Activated CD8-positive, alpha-beta memory T cell treated with anti-CD3 and anti-CD28 coated beads, Interleukin-2, amount 10 ng/mL, durations not matched to agents 7 days and 5 days (primary cell): ENCODE measurements at regions of chr3 and their contacts with region 1.

Region 1: GRCh38 chr3:50260027-50260941 is 8.7 kb upstream of the SEMA3B start:
- DNase-seq: peak; percentile 91
- ATAC-seq: peak; percentile 97
- H3K4me3 Mint-ChIP-seq: peak overlapping the region; percentile 47
- H3K27ac Mint-ChIP-seq: peak overlapping the region; percentile 32
- H3K4me1 Mint-ChIP-seq: peaks cover 7% of the 10 kb centered on the region
- H3K27me3 Mint-ChIP-seq: no peaks in the 10 kb centered on the region

Region 2: GRCh38 chr3:50088725-50089608 is 171.3 kb before region 1 on chr3 and contains the start of gene RBM5:
- CTCF ChIA-PET with region 1: no interaction called
- DNase-seq: peak; percentile 98
- ATAC-seq: peak; percentile 100
- H3K4me3 Mint-ChIP-seq: peak within 1 kb of the TSS; percentile 96
- H3K27ac Mint-ChIP-seq: peak within 1 kb of the TSS; percentile 95
- H3K4me1 Mint-ChIP-seq: peaks cover 29% of the 10 kb centered on the region
- H3K27me3 Mint-ChIP-seq: no peaks in the 10 kb centered on the region
- total RNA-seq, gene RBM5: 176 to 202 TPM

Region 3: DNA sequence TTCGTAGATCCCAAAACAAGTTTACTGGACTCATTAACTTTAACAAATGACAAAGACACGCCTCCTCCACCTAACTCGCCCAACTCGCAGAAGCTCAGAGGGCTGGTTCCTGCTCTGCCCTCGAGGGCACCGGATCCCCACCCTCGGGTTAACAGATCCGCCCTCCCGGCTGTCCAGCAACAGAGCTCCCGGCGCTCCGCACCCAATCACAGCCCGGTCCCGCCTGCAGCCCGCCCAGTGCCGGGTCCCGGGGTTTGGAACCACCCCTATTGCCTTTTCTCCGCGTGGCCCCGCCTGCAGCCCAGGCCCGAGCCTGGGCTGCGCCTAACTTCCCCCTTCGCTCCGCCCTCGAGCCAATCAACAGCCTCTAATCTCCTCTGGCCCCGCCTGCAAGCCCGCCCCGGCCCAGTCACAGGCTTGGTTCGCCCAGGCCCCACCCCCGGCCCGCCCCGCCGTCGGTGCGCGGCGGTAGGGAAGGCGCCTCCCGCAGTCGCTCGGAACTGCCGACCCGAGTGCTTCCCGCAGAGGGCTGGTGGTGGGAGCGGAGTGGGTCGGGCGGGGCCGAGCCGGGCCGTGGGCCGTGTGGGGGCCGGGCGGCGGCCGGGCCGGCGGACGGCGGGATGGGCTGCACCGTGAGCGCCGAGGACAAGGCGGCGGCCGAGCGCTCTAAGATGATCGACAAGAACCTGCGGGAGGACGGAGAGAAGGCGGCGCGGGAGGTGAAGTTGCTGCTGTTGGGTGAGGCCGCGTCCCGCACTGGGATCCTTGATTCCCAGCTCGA is 24.4 kb before region 1 on chr3 and contains the start of gene GNAI2:
- CTCF ChIA-PET with region 1: interaction called, 231 read pairs
- DNase-seq: peak; percentile 100
- ATAC-seq: peak; percentile 93
- H3K4me3 Mint-ChIP-seq: peak within 1 kb of the TSS; percentile 97
- H3K27ac Mint-ChIP-seq: peak within 1 kb of the TSS; percentile 94
- H3K4me1 Mint-ChIP-seq: peaks cover 38% of the 10 kb centered on the region
- H3K27me3 Mint-ChIP-seq: no peaks in the 10 kb centered on the region
- total RNA-seq, gene GNAI2: 450 to 509 TPM